ENCODE measurements at regions of chr16 and their contacts with region 1.

Region 1: GRCh38 chr16:2071454-2072202 is 23.8 kb downstream of the TSC2 start:
- DNase-seq: no peak
- H3K4me3 ChIP-seq: no peak overlapping the region
- H3K27ac ChIP-seq: no peak overlapping the region
- H3K27me3 ChIP-seq: no peaks in the 10 kb centered on the region
- CTCF ChIP-seq: no peak

Region 2: GRCh38 chr16:2035431-2036220 is 36.0 kb before region 1 on chr16:
- in situ Hi-C with region 1: loop called (anchors 5 kb)
- DNase-seq: peak; percentile 81
- H3K4me3 ChIP-seq: peak overlapping the region; percentile 9
- H3K27ac ChIP-seq: peak overlapping the region; percentile 71
- H3K27me3 ChIP-seq: no peaks in the 10 kb centered on the region
- CTCF ChIP-seq: no peak

Region 3: GRCh38 chr16:2160915-2161551 is 89.4 kb after region 1 on chr16:
- in situ Hi-C with region 1: loop called (anchors 10 kb)
- DNase-seq: peak; percentile 41
- H3K4me3 ChIP-seq: no peak overlapping the region
- H3K27ac ChIP-seq: peak overlapping the region; percentile 60
- H3K27me3 ChIP-seq: no peaks in the 10 kb centered on the region
- CTCF ChIP-seq: no peak

Region 4: DNA sequence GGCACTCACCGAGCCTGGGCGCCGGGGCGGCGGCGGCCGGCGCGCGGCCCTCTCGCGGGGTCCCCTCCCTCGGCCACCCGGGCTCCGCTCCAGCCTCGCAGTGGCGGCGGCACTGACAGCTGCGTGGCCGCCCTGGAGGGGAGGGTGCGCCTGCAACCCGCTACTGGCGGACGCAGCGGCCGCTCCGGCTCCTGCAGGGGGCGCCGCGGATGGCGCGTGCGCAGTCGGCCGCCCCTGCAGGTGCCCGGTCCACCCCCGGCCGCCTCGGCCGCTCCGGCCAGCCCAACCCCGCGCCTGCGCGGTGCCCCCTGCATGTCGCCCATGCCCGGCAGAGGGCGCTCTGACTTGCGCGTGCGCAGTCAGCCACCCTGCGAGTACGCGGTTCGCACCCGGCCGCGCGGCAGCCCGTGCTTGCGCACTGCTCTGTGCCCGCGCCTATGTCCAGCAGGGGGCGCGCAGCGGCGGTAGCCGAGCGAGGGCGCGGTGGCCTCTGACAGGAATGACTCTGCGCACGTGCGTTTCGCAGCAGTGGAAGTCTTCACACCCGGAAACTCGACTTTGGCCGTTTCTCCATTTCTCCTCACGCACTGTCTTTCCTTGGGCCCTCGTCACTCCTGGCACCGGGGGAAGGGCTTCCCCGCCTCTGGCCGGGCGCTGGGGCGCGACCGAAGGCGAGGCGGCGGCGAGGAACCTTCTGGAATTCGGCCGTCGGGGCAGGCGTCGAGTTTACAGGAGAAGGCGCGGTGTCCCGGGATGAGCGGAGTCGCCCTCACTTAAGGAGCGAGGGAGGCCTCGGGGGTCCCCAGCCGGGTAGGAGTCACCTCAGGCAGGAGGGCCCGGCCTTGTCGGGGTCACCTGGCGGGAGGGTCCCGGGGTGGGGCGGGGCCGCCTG is 269.2 kb after region 1 on chr16 and contains the start of gene ABCA3:
- in situ Hi-C with region 1: no loop called
- DNase-seq: peak; percentile 76
- H3K4me3 ChIP-seq: peak within 1 kb of the TSS; percentile 48
- H3K27ac ChIP-seq: no peak within 1 kb of the TSS
- H3K27me3 ChIP-seq: peaks cover 10% of the 10 kb centered on the region
- CTCF ChIP-seq: peak; percentile 78